Activated CD4-positive, alpha-beta T cell treated with anti-CD3 and anti-CD28 coated beads, Interleukin-2, amount 10 ng/mL, durations not matched to agents 24 days and 14 days (primary cell): ENCODE measurements at regions of chr4 and their contacts with region 1.

Region 1: GRCh38 chr4:152535903-152536544 is at the start of gene FBXW7:
- DNase-seq: peak; percentile 100
- H3K4me3 Mint-ChIP-seq: peak within 1 kb of the TSS; percentile 97
- H3K27ac Mint-ChIP-seq: peak within 1 kb of the TSS; percentile 100
- H3K4me1 Mint-ChIP-seq: peaks cover 43% of the 10 kb centered on the region
- H3K27me3 Mint-ChIP-seq: no peaks in the 10 kb centered on the region
- total RNA-seq, gene FBXW7: 42.2 and 49.1 TPM in 2 replicates

Region 2: GRCh38 chr4:151099229-151099975 is 1436.6 kb before region 1 on chr4 and contains the start of gene RPS3A:
- intact Hi-C with region 1: loop called (anchors 1 kb)
- DNase-seq: peak; percentile 100
- H3K4me3 Mint-ChIP-seq: peak within 1 kb of the TSS; percentile 98
- H3K27ac Mint-ChIP-seq: peak within 1 kb of the TSS; percentile 98
- H3K4me1 Mint-ChIP-seq: peaks cover 48% of the 10 kb centered on the region
- H3K27me3 Mint-ChIP-seq: peaks cover 4% of the 10 kb centered on the region
- total RNA-seq, gene RPS3A: 1,850 and 1,855 TPM in 2 replicates

Region 3: GRCh38 chr4:152454398-152455011 is 81.5 kb before region 1 on chr4:
- intact Hi-C with region 1: loop called (anchors 2 kb)
- DNase-seq: no peak
- H3K4me3 Mint-ChIP-seq: no peak overlapping the region
- H3K27ac Mint-ChIP-seq: no peak overlapping the region
- H3K4me1 Mint-ChIP-seq: peaks cover 29% of the 10 kb centered on the region
- H3K27me3 Mint-ChIP-seq: no peaks in the 10 kb centered on the region

Region 4: GRCh38 chr4:152500800-152501434 is 35.1 kb before region 1 on chr4:
- intact Hi-C with region 1: loop called (anchors 5 kb)
- DNase-seq: peak; percentile 92
- H3K4me3 Mint-ChIP-seq: no peak overlapping the region
- H3K27ac Mint-ChIP-seq: no peak overlapping the region
- H3K4me1 Mint-ChIP-seq: peaks cover 26% of the 10 kb centered on the region
- H3K27me3 Mint-ChIP-seq: no peaks in the 10 kb centered on the region

Region 5: GRCh38 chr4:152559641-152560040 is 23.6 kb after region 1 on chr4:
- intact Hi-C with region 1: loop called (anchors 1 kb)
- DNase-seq: no peak
- H3K4me3 Mint-ChIP-seq: no peak overlapping the region
- H3K27ac Mint-ChIP-seq: no peak overlapping the region
- H3K4me1 Mint-ChIP-seq: peaks cover 19% of the 10 kb centered on the region
- H3K27me3 Mint-ChIP-seq: no peaks in the 10 kb centered on the region

Region 6: DNA sequence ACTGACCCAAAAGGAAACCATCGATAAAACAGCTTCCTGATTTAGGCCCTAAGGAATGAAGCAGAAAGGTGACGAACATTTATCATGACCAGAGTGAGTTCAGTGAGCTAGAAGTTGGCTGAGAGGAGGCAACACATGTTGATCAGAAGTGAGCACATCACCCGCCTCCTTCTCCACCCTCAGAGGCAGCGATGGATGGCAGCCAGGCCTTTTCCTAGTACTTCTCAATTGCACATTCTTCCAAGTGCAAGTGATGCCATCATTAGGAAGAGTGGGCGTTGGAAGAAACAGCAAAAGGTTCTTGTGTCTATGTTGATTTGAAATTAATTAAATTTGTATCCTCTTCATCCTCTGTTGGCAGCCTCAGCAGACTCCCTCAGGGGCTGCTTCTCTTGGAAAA is 92.1 kb after region 1 on chr4:
- intact Hi-C with region 1: no loop called
- DNase-seq: no peak
- H3K4me3 Mint-ChIP-seq: no peak overlapping the region
- H3K27ac Mint-ChIP-seq: no peak overlapping the region
- H3K4me1 Mint-ChIP-seq: no peaks in the 10 kb centered on the region
- H3K27me3 Mint-ChIP-seq: no peaks in the 10 kb centered on the region

Region 7: DNA sequence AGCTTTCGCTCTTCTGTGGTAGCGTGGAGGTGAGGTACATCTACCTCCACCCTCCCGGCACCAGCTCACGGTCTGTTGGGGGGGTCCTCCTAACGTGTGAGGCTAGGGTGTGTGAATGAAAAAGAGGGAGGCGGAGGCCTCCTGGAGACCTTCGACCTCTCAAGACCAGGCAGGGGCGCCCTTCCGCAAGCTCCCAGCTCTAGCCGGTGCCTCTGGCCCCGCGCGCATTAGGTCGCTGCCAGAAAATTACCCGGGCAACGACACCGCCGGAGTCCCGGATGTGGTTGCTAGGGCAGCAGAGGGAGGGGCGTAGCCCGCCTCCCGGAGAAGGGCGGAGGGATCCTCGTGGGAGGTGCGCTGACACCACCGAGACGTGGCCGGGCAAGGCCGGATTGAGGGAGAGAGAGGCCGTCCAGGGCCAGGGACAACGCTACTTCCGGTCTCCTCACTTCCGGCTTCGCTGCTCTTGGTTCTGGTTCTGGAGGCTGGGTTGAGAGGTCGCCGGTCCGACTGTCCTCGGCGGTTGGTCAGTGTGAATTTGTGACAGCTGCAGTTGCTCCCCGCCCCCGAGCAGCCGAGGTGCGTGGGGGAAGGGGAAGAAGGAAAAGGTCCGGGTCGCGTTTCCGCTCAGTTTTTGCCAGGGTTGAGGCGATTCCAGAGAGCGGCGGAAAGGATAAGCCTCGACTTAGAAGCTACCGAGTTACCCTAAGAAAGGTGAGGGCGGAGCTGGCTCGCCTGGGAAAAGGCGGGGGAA is 243.7 kb after region 1 on chr4 and contains the starts of genes ARFIP1 and TIGD4:
- intact Hi-C with region 1: loop called (anchors 1 kb)
- DNase-seq: peak; percentile 99
- H3K4me3 Mint-ChIP-seq: peak within 1 kb of the TSS; percentile 100
- H3K27ac Mint-ChIP-seq: peak within 1 kb of the TSS; percentile 97
- H3K4me1 Mint-ChIP-seq: peaks cover 44% of the 10 kb centered on the region
- H3K27me3 Mint-ChIP-seq: peaks cover 30% of the 10 kb centered on the region
- total RNA-seq, gene ARFIP1: 13.0 and 14.6 TPM in 2 replicates
- total RNA-seq, gene TIGD4: 0.28 and 0.31 TPM in 2 replicates

Region 8: DNA sequence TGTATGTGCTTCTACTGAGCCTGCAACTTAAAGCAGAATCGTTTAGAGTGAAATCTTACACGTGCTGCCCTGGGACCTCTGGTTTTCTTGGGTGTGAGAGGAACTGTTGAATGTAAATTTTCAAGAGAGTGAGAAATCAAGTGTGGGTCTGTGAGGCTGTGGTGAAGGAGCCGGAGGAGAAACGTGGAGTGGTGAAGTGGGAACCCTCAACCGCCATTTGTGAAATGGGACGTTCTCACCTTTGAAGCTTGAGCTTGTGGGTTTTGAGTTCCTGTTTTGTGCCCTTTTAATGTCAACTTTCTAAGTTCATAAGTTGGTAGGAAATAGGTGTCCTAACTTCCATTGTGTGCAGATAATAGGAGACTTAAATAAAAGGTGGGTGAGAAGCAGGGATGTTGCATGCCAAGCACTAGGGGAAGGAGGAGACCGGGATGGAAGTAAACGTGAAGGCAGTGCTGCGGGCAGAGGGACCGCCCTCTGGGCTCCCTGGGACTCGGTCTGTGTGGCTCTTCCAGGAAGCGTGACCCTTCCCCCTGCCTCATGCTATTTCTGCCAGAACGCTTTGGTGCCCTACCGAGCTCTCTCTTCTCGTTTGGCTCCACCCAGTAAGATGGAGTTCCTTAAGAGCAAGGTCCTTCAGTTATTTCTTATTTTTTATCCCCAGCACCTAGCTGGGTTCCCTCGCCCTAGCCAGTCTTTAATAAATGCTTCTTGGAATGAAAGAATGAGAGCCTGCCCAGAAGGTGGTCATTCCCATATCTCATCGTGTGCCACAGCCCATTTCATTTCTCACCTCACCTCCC is 986.2 kb after region 1 on chr4:
- intact Hi-C with region 1: loop called (anchors 10 kb)
- DNase-seq: peak; percentile 87
- H3K4me3 Mint-ChIP-seq: peak overlapping the region; percentile 75
- H3K27ac Mint-ChIP-seq: peak overlapping the region; percentile 95
- H3K4me1 Mint-ChIP-seq: peaks cover 83% of the 10 kb centered on the region
- H3K27me3 Mint-ChIP-seq: no peaks in the 10 kb centered on the region